Mammary epithelial cell (primary cell): ENCODE measurements at regions of chr17 and their contacts with region 1.

Region 1: DNA sequence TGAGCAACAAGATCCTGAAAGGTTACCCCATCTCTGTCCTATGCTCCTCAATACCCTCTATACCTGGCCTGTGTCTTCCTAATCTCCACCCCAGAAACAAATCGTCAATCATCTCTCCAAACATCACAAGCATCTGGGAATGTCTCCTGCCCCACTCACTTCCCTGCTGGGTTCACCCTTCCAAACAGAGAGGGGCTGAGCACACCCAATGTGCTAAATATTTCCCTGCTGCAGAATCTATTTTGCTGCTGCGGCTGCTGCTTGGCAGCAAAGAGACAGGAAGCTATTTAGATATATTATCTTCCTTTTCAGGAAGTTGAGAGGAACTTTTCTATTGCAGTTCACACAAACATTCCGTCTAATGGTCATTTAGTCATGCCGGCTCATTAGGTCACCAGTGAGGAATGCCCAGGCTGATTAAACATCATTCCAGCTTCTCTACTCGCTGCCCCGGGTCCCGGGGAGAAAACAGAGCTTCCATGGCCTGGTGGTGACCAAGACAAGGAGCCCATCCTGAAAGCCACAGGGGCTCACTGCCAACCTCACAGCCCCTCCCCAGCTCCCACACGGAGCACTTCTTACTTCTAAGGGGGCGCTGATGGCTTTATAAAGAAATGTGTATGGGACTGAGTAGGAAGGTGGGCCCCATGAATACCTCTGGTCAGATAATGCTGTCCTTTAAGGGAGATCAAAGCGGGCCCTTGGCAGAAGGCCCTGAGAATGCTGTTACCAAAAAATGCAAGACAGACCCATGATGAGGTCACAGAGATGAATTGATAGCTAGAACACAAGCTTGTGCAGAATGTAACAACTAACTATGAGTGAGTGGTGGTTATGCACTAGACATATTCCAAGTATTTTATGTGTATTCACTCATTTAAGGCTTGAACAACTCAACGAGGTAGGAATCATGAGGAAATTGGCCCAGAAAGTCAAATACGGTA is 218.3 kb downstream of the SOX9 start:
- DNase-seq: peak; percentile 78
- H3K4me3 ChIP-seq: no peak overlapping the region
- H3K27ac ChIP-seq: peak overlapping the region; percentile 58
- H3K4me1 ChIP-seq: peaks cover 25% of the 10 kb centered on the region
- H3K27me3 ChIP-seq: no peaks in the 10 kb centered on the region
- CTCF ChIP-seq: no peak

Region 2: DNA sequence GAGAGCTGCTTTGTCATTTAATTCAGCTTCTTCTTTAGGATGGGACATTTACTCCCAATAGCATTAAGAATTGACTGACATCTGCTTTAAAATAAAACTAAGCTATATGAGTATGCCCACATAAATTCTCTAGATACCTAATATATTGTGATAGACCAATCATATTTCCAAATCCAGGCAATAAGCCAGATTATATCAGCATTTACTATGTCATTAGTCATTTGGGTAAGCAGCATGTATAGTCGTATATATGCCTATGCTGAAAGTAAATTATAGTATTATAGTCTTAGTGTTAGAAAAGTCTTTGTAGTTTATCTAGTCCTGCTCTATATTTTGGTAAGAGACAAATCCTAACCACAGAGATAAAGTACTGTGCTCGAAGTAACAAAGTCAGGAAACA is 1211.7 kb before region 1 on chr17:
- CTCF ChIA-PET with region 1: no interaction called
- dilution Hi-C with region 1: no loop called
- in situ Hi-C with region 1: no loop called
- intact Hi-C with region 1: loop called (anchors 10 kb)
- DNase-seq: no peak
- H3K4me3 ChIP-seq: no peak overlapping the region
- H3K27ac ChIP-seq: no peak overlapping the region
- H3K4me1 ChIP-seq: no peaks in the 10 kb centered on the region
- H3K27me3 ChIP-seq: no peaks in the 10 kb centered on the region
- CTCF ChIP-seq: no peak

Region 3: DNA sequence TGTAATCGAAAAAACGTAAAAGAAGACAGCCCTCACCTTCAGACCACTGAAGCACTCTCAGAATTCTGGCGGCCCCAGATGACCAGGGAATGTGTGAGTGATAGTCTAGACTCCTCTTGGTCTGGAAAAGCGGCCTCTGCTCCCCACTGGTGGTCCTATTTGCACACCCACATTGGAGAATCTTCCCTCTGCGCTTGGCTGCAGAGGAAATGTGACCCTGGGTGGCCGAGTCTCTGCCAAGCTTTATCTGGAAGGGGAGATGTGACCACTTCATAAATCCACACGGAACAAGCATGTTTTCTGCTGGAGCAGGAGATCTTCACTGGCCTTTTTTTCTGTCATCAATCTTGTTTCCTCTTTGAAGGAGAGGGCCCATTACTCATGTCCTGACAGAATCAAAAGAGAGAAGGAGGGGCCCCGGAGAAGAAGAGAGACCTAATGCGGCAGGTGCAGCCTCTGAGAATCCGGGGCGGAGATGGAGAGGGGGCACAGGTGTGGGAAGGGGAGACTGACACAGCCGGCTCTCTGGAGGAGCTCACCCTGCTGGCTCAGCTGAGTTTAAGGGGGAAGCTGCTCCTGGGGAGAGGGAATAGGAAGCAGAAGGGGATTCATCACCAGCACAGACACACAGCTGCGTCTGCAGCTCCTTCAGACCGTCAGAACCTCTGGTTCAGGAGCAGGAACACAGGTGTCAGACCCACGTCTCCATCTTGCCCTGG is 102.0 kb before region 1 on chr17:
- CTCF ChIA-PET with region 1: no interaction called
- dilution Hi-C with region 1: no loop called
- in situ Hi-C with region 1: no loop called
- intact Hi-C with region 1: no loop called
- DNase-seq: no peak
- H3K4me3 ChIP-seq: no peak overlapping the region
- H3K27ac ChIP-seq: no peak overlapping the region
- H3K4me1 ChIP-seq: no peaks in the 10 kb centered on the region
- H3K27me3 ChIP-seq: no peaks in the 10 kb centered on the region
- CTCF ChIP-seq: no peak

Region 4: GRCh38 chr17:72287586-72287985 is 51.5 kb before region 1 on chr17:
- CTCF ChIA-PET with region 1: no interaction called
- dilution Hi-C with region 1: no loop called
- in situ Hi-C with region 1: loop called in 1 of 2 experiments (anchors 10 kb)
- intact Hi-C with region 1: no loop called
- DNase-seq: no peak
- H3K4me3 ChIP-seq: no peak overlapping the region
- H3K27ac ChIP-seq: no peak overlapping the region
- H3K4me1 ChIP-seq: peaks cover 6% of the 10 kb centered on the region
- H3K27me3 ChIP-seq: no peaks in the 10 kb centered on the region
- CTCF ChIP-seq: no peak